OCI-LY7 (cell line): ENCODE measurements at regions of chr18 and their contacts with region 1.

Region 1: DNA sequence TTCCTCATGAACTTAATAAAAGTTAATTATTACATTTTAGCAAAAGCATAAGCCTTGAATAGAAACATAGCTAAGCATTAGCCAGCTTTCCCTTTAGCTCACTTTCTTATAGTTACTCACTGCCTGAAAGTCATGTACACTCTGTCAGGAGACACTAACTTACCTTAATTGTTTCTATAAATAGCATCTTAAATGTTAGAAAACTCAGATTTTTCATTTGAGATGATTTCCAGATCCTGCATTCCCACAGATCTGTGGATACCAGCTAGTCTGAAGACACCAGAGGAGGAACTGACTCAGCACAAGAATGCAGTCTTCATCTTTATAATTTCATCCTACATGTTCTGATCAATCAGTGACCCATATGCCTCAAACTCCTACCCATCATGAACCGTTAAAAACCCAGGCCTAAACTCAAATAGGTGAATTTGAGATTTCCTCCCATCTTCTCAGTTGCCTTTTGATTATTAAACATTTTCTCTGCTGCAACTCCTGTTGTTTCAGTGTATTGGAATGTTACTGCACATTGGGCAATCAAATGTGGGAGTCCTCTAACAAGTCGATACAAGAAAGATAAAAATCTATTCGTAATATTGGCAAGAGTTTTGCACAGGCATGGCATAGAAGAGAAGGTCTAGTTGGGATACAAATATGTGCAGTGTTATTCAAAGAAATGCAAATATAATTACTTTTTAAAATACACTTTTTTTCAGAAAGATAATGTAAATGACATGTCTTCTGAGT is 857.4 kb upstream of the CDH2 start:
- DNase-seq: no peak
- H3K4me3 ChIP-seq: no peak overlapping the region
- H3K27ac ChIP-seq: no peak overlapping the region
- H3K4me1 ChIP-seq: no peaks in the 10 kb centered on the region
- CTCF ChIP-seq: no peak

Region 2: GRCh38 chr18:28984731-28985130 is 49.6 kb before region 1 on chr18:
- CTCF ChIA-PET with region 1: no interaction called
- POLR2A ChIA-PET with region 1: no interaction called
- intact Hi-C with region 1: loop called (anchors 10 kb)
- DNase-seq: no peak
- H3K4me3 ChIP-seq: no peak overlapping the region
- H3K27ac ChIP-seq: no peak overlapping the region
- H3K4me1 ChIP-seq: no peaks in the 10 kb centered on the region
- CTCF ChIP-seq: no peak